ENCODE measurements at regions of chr4 and their contacts with region 1.

Region 1: GRCh38 chr4:82851885-82852750 is 38.8 kb downstream of the SEC31A start:
- DNase-seq: no peak
- H3K4me3 Mint-ChIP-seq: no peak overlapping the region
- H3K27ac Mint-ChIP-seq: peak overlapping the region; percentile 73
- H3K4me1 Mint-ChIP-seq: peaks cover 14% of the 10 kb centered on the region
- H3K27me3 Mint-ChIP-seq: no peaks in the 10 kb centered on the region

Region 2: DNA sequence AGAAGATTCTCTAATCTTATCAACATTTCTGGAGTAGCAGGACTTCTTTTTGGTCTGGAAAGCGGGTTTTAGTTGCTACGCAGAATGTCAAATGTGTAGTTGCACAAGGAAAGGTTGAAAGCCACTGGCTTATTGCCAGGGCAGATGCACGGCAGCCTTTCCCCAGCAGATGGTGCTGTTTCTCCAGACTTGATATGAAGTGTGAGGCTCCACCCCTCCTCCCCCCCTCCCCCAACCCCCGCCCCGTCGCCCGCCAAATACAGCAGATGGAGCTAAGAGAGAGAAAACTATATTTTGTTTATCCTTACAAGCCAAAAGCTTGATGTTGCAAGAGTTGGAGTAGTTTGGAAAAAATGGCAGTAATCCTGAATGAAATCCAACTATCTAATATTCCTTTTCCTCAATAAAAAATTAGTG is 389.7 kb before region 1 on chr4:
- intact Hi-C with region 1: loop called (anchors 10 kb)
- DNase-seq: peak; percentile 65
- H3K4me3 Mint-ChIP-seq: no peak overlapping the region
- H3K27ac Mint-ChIP-seq: no peak overlapping the region
- H3K4me1 Mint-ChIP-seq: peaks cover 5% of the 10 kb centered on the region
- H3K27me3 Mint-ChIP-seq: no peaks in the 10 kb centered on the region

Region 3: GRCh38 chr4:82823062-82823461 is 29.1 kb before region 1 on chr4:
- intact Hi-C with region 1: no loop called
- DNase-seq: no peak
- H3K4me3 Mint-ChIP-seq: no peak overlapping the region
- H3K27ac Mint-ChIP-seq: no peak overlapping the region
- H3K4me1 Mint-ChIP-seq: peaks cover 10% of the 10 kb centered on the region
- H3K27me3 Mint-ChIP-seq: no peaks in the 10 kb centered on the region

Region 4: DNA sequence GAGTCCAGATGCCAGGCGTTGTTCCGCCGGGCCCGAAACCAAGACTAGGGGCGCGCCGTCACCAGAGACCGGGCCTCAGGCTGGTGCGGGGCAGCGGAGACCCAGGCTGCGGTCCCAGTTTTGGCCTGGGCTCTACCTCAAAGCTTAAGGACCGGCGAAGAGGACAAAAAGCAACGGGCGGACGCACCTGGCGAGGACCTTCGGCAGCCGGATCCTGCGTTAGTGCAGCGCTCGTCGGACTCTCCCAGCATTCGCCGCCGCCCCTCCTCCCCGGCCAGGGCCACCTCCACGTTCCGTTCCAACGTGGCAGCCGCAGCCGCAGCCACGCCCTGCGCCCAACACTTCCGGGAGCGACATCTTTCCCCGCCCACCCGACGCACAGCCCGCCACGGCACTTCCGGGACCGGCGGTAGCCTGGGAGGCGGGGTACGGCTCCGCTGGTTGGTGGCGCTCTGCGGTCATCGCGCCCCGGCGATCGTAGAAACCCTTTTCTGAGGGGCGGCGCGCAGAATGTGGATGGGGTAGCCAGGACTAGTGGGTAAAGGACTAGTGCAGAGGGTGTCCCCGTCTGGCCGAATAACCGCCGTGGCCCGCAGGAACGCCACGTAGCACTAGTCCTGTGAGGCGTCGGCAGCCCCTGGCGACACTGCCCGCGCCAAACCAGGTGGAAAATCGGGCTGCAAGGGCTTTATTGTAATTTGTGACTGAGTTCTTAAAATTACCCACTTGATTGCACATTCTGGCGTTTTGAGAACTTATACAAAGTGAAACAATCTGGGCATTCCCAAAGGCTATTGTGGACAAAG is 39.0 kb after region 1 on chr4 and contains the start of gene SEC31A:
- intact Hi-C with region 1: loop called (anchors 1 kb)
- DNase-seq: peak; percentile 96
- H3K4me3 Mint-ChIP-seq: peak within 1 kb of the TSS; percentile 88
- H3K27ac Mint-ChIP-seq: peak within 1 kb of the TSS; percentile 86
- H3K4me1 Mint-ChIP-seq: peaks cover 51% of the 10 kb centered on the region
- H3K27me3 Mint-ChIP-seq: no peaks in the 10 kb centered on the region
- total RNA-seq, gene SEC31A: 118 and 123 TPM in 2 replicates

Measured in activated T-helper 1 cell treated with anti-CD3 and anti-CD28 coated beads, Interleukin-12 subunit alpha, Interleukin-12 subunit beta, Interleukin-2, Interleukin-4 antibody, amounts not matched to agents 30 ng/mL and 10 ng/mL and 1 ng/mL, durations not matched to agents 14 hours and 24 hours and 36 hours (primary cell).